ENCODE measurements at regions of chr2 and their contacts with region 1.

Region 1: DNA sequence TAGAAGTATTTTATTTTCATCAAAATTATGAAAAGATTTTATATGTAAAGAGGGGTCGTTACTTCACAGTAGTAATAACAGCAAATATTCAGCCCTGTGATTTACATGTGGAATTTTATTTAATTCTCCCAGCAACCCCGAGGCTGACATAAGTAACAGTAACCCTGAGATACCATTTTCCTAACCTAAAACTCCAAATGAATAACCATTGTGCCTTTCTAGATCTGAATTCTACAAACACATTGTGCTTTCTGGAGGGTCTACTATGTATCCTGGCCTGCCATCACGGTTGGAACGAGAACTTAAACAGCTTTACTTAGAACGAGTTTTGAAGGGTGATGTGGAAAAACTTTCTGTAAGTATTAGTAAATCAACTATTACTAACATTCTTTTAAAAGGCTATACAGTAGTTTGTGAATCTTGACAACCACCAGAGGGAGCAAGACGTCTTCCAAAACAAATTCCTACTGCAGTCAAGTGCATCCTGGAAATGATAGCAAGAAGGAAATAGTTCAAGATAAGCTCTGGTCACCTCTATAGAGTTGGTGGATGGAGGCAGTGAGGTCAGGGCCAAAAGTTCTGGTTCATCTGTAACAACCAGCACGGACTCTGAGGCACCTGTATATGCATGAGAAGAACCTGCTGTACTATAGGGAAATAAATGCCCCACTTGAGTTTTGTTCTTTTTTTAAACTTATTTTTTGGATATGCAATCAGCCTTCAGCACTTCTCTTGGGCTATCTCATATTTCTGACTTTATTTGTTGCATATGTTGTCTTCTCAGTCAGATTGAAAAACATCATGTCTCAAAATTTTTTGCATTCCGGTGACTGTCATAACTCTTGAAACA is 37.4 kb downstream of the ACTR2 start:
- DNase-seq: peak; percentile 78
- ATAC-seq: peak; percentile 87
- H3K4me3 ChIP-seq: no peak overlapping the region
- H3K27ac ChIP-seq: no peak overlapping the region
- H3K4me1 ChIP-seq: peaks cover 3% of the 10 kb centered on the region in 2 experiments; a peak in 1 of 4 replicates
- H3K27me3 ChIP-seq: no peaks in the 10 kb centered on the region
- CTCF ChIP-seq: peak; percentile 52 to 80 (median 76); a peak in 5 of 6 replicates
- POLR2A ChIP-seq: no peak
- RAD21 ChIP-seq: peak; percentile 92

Region 2: GRCh38 chr2:65350684-65351083 is 85.6 kb after region 1 on chr2:
- CTCF ChIA-PET with region 1: no interaction called
- POLR2A ChIA-PET with region 1: no interaction called
- RAD21 ChIA-PET with region 1: no interaction called
- intact Hi-C with region 1: loop called (anchors 5 kb)
- DNase-seq: no peak
- ATAC-seq: peak; percentile 60
- H3K4me3 ChIP-seq: no peak overlapping the region
- H3K27ac ChIP-seq: no peak overlapping the region
- H3K4me1 ChIP-seq: peaks cover 31 to 46% of the 10 kb centered on the region in 2 experiments
- H3K27me3 ChIP-seq: no peaks in the 10 kb centered on the region
- CTCF ChIP-seq: peak in 2 of 3 experiments; percentile 43 to 50; a peak in 3 of 6 replicates
- POLR2A ChIP-seq: no peak
- RAD21 ChIP-seq: no peak

Region 3: DNA sequence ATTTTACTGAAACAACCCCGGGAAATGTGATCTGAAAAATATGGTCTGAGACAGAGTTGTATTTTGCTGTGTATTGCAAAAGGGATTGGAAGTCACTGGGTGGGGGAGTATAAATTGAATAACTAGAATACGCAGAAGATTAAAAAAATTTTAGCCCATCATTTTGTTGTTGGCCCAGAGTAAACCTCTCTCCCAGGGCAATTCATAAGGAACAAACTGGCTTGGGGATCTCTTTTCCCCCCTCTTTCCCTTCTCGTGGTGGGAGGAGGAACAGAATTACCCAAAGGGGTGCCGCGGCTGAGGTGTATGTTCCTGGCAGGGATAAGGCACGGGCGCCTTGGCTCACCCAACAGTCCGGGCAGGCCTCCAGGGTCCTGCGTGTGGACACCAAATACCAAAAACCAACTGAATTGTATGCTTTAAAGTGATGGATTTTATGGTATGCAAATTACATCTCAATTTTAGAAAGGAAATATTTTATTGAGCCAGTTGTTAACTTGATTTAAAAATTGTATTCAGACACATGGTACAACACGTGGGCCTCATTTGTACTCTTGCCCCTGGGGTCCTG is 288.5 kb after region 1 on chr2:
- CTCF ChIA-PET with region 1: interaction called, 9 read pairs
- POLR2A ChIA-PET with region 1: no interaction called
- RAD21 ChIA-PET with region 1: interaction called in 1 of 2 experiments, 4 read pairs
- intact Hi-C with region 1: loop called (anchors 1 kb)
- DNase-seq: no peak
- ATAC-seq: peak; percentile 2; the same call in 1 of the 2 replicates
- H3K4me3 ChIP-seq: peak overlapping the region; percentile 48 to 67
- H3K27ac ChIP-seq: no peak overlapping the region
- H3K4me1 ChIP-seq: peaks cover 5 to 25% of the 10 kb centered on the region in 2 experiments; a peak in 3 of 4 replicates
- H3K27me3 ChIP-seq: no peaks in the 10 kb centered on the region
- CTCF ChIP-seq: no peak; a peak in 1 of 6 replicates
- POLR2A ChIP-seq: no peak
- RAD21 ChIP-seq: no peak

Region 4: GRCh38 chr2:65566620-65567019 is 301.6 kb after region 1 on chr2:
- CTCF ChIA-PET with region 1: interaction called, 17 read pairs
- POLR2A ChIA-PET with region 1: no interaction called
- RAD21 ChIA-PET with region 1: interaction called in 1 of 2 experiments, 3 read pairs
- intact Hi-C with region 1: no loop called
- DNase-seq: no peak
- ATAC-seq: peak; percentile 77
- H3K4me3 ChIP-seq: peak overlapping the region; percentile 37 to 49
- H3K27ac ChIP-seq: peak overlapping the region; percentile 49
- H3K4me1 ChIP-seq: peaks cover 16 to 21% of the 10 kb centered on the region in 2 experiments
- H3K27me3 ChIP-seq: no peaks in the 10 kb centered on the region
- CTCF ChIP-seq: no peak
- POLR2A ChIP-seq: no peak
- RAD21 ChIP-seq: no peak

Region 5: GRCh38 chr2:65576861-65577601 is 312.0 kb after region 1 on chr2:
- CTCF ChIA-PET with region 1: interaction called, 6 read pairs
- POLR2A ChIA-PET with region 1: no interaction called
- RAD21 ChIA-PET with region 1: no interaction called
- intact Hi-C with region 1: loop called (anchors 1 kb)
- DNase-seq: peak; percentile 90
- ATAC-seq: peak; percentile 83
- H3K4me3 ChIP-seq: peak overlapping the region; percentile 12 to 31; a peak in 3 of 4 replicates
- H3K27ac ChIP-seq: peak overlapping the region; percentile 76
- H3K4me1 ChIP-seq: peaks cover 27 to 69% of the 10 kb centered on the region in 2 experiments
- H3K27me3 ChIP-seq: no peaks in the 10 kb centered on the region
- CTCF ChIP-seq: no peak
- POLR2A ChIP-seq: no peak
- RAD21 ChIP-seq: no peak